ENCODE measurements at regions of chrX and their contacts with region 1.

Region 1: GRCh38 chrX:56978172-56978571 is 17.2 kb downstream of the SPIN3 start:
- DNase-seq: peak; percentile 56
- ATAC-seq: peak; percentile 98
- H3K4me3 ChIP-seq: no peak overlapping the region
- H3K27ac ChIP-seq: no peak overlapping the region
- H3K4me1 ChIP-seq: no peaks in the 10 kb centered on the region
- H3K27me3 ChIP-seq: no peaks in the 10 kb centered on the region
- CTCF ChIP-seq: peak; percentile 67 to 77 (median 71)
- EP300 ChIP-seq: no peak
- POLR2A ChIP-seq: no peak
- RAD21 ChIP-seq: peak; percentile 90

Region 2: GRCh38 chrX:55717521-55718497 is 1260.4 kb before region 1 on chrX and contains the start of gene RRAGB:
- CTCF ChIA-PET with region 1: no interaction called
- POLR2A ChIA-PET with region 1: no interaction called
- RAD21 ChIA-PET with region 1: no interaction called
- SMC1A ChIA-PET with region 1: no interaction called
- in situ Hi-C with region 1: loop called (anchors 25 kb)
- intact Hi-C with region 1: no loop called
- DNase-seq: peak; percentile 90
- ATAC-seq: peak; percentile 96
- H3K4me3 ChIP-seq: peak within 1 kb of the TSS; percentile 63
- H3K27ac ChIP-seq: peak within 1 kb of the TSS; percentile 84
- H3K4me1 ChIP-seq: no peaks in the 10 kb centered on the region
- H3K27me3 ChIP-seq: no peaks in the 10 kb centered on the region
- CTCF ChIP-seq: peak; percentile 42 to 65 (median 52); a peak in 5 of 6 replicates
- EP300 ChIP-seq: no peak
- POLR2A ChIP-seq: peak; percentile 80
- RAD21 ChIP-seq: peak; percentile 56
- polyA plus RNA-seq, gene RRAGB: 9.2 to 12.4 TPM

Region 3: DNA sequence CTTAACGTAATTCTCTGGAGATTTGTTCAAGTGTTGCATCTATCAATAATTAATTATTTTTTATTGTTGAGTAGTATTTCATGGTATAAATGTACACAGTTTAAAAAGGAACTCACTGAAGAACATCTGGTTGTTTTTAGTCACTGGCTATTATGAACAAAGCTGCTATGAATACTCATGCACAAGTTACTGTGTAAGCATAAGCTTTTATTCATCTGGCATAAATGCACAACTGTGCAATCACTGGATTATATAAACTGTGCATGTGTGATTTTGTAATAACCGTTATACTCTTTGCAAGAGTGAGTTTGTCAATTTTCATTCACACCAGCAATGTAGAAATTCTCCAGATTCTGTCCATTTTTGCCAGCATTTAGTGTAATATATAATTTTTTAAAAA is 458.5 kb before region 1 on chrX:
- CTCF ChIA-PET with region 1: no interaction called
- POLR2A ChIA-PET with region 1: no interaction called
- RAD21 ChIA-PET with region 1: no interaction called
- SMC1A ChIA-PET with region 1: no interaction called
- in situ Hi-C with region 1: no loop called
- intact Hi-C with region 1: no loop called
- DNase-seq: no peak
- ATAC-seq: no peak
- H3K4me3 ChIP-seq: no peak overlapping the region
- H3K27ac ChIP-seq: no peak overlapping the region
- H3K4me1 ChIP-seq: no peaks in the 10 kb centered on the region
- H3K27me3 ChIP-seq: no peaks in the 10 kb centered on the region
- CTCF ChIP-seq: no peak
- EP300 ChIP-seq: no peak
- POLR2A ChIP-seq: no peak
- RAD21 ChIP-seq: no peak

Region 4: DNA sequence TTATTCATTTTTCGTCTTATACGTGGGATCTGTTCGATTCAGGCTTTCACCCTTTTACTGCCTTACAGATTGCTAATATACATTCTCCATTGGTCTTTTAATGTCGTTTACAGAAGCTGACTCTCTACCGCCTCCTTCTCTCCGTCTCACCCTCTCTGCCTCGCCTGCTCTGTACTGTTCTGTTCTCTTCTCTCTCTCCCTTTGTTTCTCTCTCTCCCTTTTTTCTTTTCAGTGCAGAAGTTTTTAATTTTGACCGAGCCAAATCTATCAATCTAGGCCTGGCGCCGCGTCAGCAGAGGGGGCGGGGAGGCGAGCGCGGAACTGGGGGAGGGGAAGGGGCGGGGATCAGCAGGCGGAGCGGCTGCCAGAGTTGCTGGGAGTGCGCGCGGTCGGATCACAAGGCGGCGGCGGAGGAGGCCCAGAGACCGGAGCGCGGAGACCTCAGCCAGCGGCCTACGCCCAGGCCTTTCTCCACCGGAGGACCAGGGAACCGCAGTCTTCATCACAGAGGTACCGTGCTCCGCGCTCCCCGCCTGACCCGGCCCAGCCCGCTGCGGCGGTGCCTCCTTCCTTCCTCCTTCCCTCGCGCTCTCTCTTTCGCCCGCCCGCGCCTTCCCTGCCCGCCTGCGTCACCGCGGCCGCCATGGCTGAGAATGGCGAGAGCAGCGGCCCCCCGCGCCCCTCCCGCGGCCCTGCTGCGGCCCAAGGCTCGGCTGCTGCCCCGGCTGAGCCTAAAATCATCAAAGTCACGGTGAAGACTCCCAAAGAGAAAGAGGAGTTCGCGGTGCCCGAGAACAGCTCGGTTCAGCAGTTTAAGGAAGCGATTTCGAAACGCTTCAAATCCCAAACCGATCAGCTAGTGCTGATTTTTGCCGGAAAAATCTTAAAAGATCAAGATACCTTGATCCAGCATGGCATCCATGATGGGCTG is 414.7 kb before region 1 on chrX and contains the start of gene UBQLN2:
- CTCF ChIA-PET with region 1: no interaction called
- POLR2A ChIA-PET with region 1: no interaction called
- RAD21 ChIA-PET with region 1: no interaction called
- SMC1A ChIA-PET with region 1: no interaction called
- in situ Hi-C with region 1: loop called (anchors 25 kb)
- intact Hi-C with region 1: loop called (anchors 5 kb)
- DNase-seq: no peak
- ATAC-seq: peak; percentile 84
- H3K4me3 ChIP-seq: peak within 1 kb of the TSS; percentile 76
- H3K27ac ChIP-seq: peak within 1 kb of the TSS; percentile 77
- H3K4me1 ChIP-seq: no peaks in the 10 kb centered on the region
- H3K27me3 ChIP-seq: no peaks in the 10 kb centered on the region
- CTCF ChIP-seq: no peak
- EP300 ChIP-seq: no peak
- POLR2A ChIP-seq: peak; percentile 93
- RAD21 ChIP-seq: no peak
- polyA plus RNA-seq, gene UBQLN2: 2.4 to 6.2 TPM

Region 5: GRCh38 chrX:56764153-56764974 is 213.8 kb before region 1 on chrX:
- CTCF ChIA-PET with region 1: interaction called, 25 read pairs
- POLR2A ChIA-PET with region 1: no interaction called
- RAD21 ChIA-PET with region 1: interaction called, 16 read pairs
- SMC1A ChIA-PET with region 1: interaction called, 17 read pairs
- in situ Hi-C with region 1: no loop called
- intact Hi-C with region 1: no loop called
- DNase-seq: peak; percentile 99
- ATAC-seq: peak; percentile 60
- H3K4me3 ChIP-seq: peak overlapping the region; percentile 64
- H3K27ac ChIP-seq: peak overlapping the region; percentile 90
- H3K4me1 ChIP-seq: peaks cover 31% of the 10 kb centered on the region
- H3K27me3 ChIP-seq: no peaks in the 10 kb centered on the region
- CTCF ChIP-seq: peak; percentile 53 to 87 (median 55); a peak in 5 of 6 replicates
- EP300 ChIP-seq: 0 out of 4 replicates have a peak, but pooled peaks of 1 of the 2 experiments have one; percentile 21
- POLR2A ChIP-seq: no peak
- RAD21 ChIP-seq: peak; percentile 90

Region 6: GRCh38 chrX:56802921-56803849 is 175.0 kb before region 1 on chrX:
- CTCF ChIA-PET with region 1: interaction called, 25 read pairs
- POLR2A ChIA-PET with region 1: no interaction called
- RAD21 ChIA-PET with region 1: interaction called, 21 read pairs
- SMC1A ChIA-PET with region 1: interaction called, 13 read pairs
- in situ Hi-C with region 1: no loop called
- intact Hi-C with region 1: loop called (anchors 1 kb)
- DNase-seq: peak; percentile 77
- ATAC-seq: peak; percentile 82
- H3K4me3 ChIP-seq: peak overlapping the region; percentile 60
- H3K27ac ChIP-seq: peak overlapping the region; percentile 84
- H3K4me1 ChIP-seq: peaks cover 20% of the 10 kb centered on the region
- H3K27me3 ChIP-seq: no peaks in the 10 kb centered on the region
- CTCF ChIP-seq: peak; percentile 62 to 82 (median 66)
- EP300 ChIP-seq: no peak
- POLR2A ChIP-seq: no peak
- RAD21 ChIP-seq: peak; percentile 91

Region 7: DNA sequence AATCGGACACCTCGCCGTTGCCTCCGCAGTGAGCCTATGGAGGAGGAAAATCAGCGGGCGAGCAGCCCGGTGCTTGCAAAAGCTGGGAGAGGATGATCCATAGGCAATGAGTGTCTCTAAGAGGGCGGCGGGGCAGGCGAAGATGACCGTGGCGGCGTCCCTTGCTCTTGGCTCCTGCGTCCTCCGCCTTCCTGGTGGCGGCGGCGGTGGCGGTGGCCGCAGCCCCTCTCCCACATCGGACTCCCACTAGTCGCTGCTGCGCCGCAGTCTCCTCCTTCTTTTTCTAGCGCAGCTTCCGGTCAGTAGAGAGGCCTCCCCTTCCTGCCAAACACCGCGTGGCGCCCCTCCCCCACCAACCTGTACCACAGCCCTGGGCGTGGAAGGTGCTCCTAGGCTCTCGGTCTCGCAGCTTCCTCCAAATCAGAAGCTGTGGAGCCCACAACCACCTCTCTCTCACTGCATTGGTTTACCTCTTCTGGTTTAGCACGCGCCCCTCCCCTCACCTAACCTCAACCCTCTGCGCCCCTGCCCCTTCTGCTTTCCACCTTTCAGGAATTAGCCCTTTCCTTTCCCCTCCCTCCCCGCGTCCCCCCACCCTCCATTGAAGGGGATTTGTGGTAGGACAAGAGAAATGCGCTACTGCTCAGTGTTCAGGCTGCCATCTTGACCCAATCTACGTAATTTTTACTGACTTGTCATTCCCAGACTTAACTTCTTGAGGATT is 17.3 kb after region 1 on chrX and contains the start of gene SPIN3:
- CTCF ChIA-PET with region 1: interaction called, 13 read pairs
- POLR2A ChIA-PET with region 1: no interaction called
- RAD21 ChIA-PET with region 1: interaction called, 3 read pairs
- SMC1A ChIA-PET with region 1: interaction called, 11 read pairs
- in situ Hi-C with region 1: no loop called
- intact Hi-C with region 1: no loop called
- DNase-seq: peak; percentile 56
- ATAC-seq: peak; percentile 95
- H3K4me3 ChIP-seq: peak within 1 kb of the TSS; percentile 72
- H3K27ac ChIP-seq: peak within 1 kb of the TSS; percentile 45
- H3K4me1 ChIP-seq: no peaks in the 10 kb centered on the region; the same call in 1 of the 2 replicates
- H3K27me3 ChIP-seq: no peaks in the 10 kb centered on the region
- CTCF ChIP-seq: no peak
- EP300 ChIP-seq: no peak
- POLR2A ChIP-seq: peak; percentile 84
- RAD21 ChIP-seq: no peak
- polyA plus RNA-seq, gene SPIN3: 2.1 to 2.4 TPM

Region 8: DNA sequence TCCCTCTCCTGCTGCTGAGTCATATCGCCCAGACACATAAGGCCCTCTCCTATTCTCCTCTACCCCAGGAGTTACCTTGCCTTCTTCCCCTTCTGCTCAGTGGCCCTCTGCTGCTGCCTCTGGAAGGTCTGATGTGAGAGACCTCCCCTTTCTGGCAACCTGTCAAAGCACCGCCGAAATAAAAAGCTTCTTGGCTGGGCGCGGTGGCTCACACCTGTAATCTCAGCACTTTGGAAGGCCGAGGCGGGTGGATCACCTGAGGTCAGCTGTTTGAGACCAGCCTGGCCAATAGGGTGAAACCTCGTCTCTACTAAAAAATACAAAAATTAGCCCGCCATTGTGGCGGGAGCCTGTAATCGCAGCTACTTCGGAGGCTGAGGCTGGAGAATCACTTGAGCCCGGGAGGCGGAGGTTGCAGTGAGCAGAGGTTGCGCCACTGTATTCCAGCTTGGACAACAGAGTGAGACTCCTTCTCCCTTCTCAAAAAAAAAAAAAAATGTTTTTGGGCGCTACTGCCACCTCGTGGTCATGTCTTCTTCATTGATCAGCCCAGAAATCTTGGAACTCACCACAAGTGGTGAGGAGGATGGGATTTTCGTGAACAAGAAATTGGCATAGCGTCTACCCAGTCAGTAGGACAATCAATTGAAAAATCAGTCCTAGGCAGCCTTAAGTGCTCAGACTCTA is 940.7 kb after region 1 on chrX:
- CTCF ChIA-PET with region 1: no interaction called
- POLR2A ChIA-PET with region 1: no interaction called
- RAD21 ChIA-PET with region 1: no interaction called
- SMC1A ChIA-PET with region 1: no interaction called
- in situ Hi-C with region 1: loop called (anchors 25 kb)
- intact Hi-C with region 1: no loop called
- DNase-seq: no peak
- ATAC-seq: peak; percentile 66
- H3K4me3 ChIP-seq: no peak overlapping the region
- H3K27ac ChIP-seq: no peak overlapping the region
- H3K4me1 ChIP-seq: no peaks in the 10 kb centered on the region
- H3K27me3 ChIP-seq: no peaks in the 10 kb centered on the region
- CTCF ChIP-seq: peak; percentile 45 to 49 (median 47); a peak in 5 of 6 replicates
- EP300 ChIP-seq: no peak
- POLR2A ChIP-seq: no peak
- RAD21 ChIP-seq: peak; percentile 52

Measured in GM12878 (cell line).